Right ventricle myocardium inferior (tissue), 1 donor: ENCODE measurements at regions of chr19 and their contacts with region 1.

Region 1: GRCh38 chr19:9796113-9796773 is 22.6 kb downstream of the FBXL12 start:
- DNase-seq: peak; percentile 80
- ATAC-seq: peak; percentile 24

Region 2: DNA sequence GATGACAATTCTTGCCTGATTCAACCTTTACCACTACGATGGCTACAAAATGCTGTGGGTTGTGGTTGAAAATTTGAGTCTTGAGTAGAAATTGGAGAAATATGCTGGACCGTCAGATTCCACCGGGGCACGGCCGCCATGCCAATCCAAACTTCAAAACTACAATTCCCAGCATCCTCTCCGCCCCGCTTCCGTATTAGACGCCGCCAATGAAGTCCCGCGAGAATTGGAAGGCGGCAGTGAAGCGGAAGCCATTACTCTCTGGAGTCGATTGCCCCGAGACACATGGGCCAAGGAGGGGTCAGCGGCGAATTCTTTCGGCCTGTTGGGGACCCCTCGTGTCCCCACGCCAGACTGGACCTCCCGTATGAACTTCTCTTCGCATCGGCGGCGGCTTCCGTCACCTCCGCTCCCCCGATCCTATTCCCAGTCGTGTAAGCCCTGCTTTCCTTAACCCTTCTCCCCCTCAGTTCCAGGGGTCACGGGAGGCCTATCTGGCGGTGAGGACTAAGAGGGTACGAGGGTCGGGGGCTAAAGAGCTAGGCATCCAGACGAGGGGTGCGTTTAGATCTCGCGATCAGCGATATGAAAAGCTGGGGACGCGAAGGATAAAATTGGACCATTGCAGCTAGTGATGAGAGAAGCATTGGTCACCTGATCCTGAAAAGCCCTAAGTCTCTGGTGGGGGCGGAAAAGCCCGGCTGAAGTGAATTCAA is 655.9 kb before region 1 on chr19 and contains the start of gene ZNF317:
- intact Hi-C with region 1: loop called (anchors 5 kb)
- DNase-seq: peak; percentile 97
- ATAC-seq: peak; percentile 97
- total RNA-seq, gene ZNF317: 14.7 TPM

Region 3: DNA sequence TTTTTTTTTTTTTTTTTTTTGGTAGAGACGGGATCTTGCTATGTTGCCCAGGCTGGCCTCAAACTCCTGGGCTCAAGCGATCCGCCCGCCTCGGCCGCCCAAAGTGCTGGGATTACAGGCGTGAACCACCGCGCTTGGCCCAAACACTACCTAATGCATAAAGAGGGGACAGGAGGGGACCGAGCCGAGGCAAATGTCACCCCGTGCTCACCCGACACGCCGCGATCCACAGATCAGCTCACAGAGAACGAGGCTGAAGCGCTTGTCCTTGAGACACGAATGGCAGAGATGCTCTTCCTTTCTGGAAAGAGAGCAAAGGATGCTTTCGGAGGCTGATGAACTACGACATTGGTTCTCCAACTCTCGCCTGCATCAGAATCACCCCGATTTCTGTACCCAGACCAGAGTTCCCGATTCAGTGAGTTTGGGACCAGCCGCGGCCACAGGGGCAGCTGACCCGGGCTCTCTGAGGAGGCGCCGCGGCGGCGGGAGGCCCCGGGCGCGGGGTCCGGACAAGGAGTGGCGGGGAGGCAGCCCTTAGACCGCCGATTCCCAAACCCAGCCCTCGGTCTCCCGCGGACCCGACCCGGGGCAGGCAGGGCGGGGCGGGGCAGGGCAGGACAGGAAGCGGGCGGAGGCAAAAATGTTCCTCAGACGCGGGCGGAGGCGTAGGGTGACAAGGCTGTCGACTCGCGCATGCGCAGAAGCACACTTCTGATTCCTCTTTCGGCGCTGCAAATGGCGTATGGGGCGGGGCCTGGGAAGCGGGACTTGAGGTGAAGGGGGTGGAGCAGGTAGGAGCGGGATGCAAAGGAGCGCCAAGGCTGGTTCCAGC is 486.9 kb before region 1 on chr19 and contains the start of gene ZNF699:
- intact Hi-C with region 1: loop called (anchors 2 kb)
- DNase-seq: peak; percentile 99
- ATAC-seq: peak; percentile 98
- total RNA-seq, gene ZNF699: 3.5 TPM

Region 4: GRCh38 chr19:9323919-9324583 is 472.2 kb before region 1 on chr19 and contains the start of gene ZNF559:
- intact Hi-C with region 1: no loop called
- DNase-seq: peak; percentile 95
- ATAC-seq: peak; percentile 96
- total RNA-seq, gene ZNF559: 16.6 TPM

Region 5: GRCh38 chr19:9584073-9584833 is 212.0 kb before region 1 on chr19 and contains the start of gene ZNF121:
- intact Hi-C with region 1: loop called (anchors 5 kb)
- DNase-seq: peak; percentile 93
- ATAC-seq: peak; percentile 95
- total RNA-seq, gene ZNF121: 20.7 TPM

Region 6: GRCh38 chr19:9818734-9819589 is 22.7 kb after region 1 on chr19 and contains the start of gene FBXL12:
- intact Hi-C with region 1: loop called (anchors 1 kb)
- DNase-seq: peak; percentile 100
- ATAC-seq: peak; percentile 95
- total RNA-seq, gene FBXL12: 10.4 TPM

Region 7: GRCh38 chr19:10018263-10018662 is 222.0 kb after region 1 on chr19:
- intact Hi-C with region 1: no loop called
- DNase-seq: no peak
- ATAC-seq: no peak